AG04450 (cell line): ENCODE measurements at regions of chr15 and their contacts with region 1.

Region 1: DNA sequence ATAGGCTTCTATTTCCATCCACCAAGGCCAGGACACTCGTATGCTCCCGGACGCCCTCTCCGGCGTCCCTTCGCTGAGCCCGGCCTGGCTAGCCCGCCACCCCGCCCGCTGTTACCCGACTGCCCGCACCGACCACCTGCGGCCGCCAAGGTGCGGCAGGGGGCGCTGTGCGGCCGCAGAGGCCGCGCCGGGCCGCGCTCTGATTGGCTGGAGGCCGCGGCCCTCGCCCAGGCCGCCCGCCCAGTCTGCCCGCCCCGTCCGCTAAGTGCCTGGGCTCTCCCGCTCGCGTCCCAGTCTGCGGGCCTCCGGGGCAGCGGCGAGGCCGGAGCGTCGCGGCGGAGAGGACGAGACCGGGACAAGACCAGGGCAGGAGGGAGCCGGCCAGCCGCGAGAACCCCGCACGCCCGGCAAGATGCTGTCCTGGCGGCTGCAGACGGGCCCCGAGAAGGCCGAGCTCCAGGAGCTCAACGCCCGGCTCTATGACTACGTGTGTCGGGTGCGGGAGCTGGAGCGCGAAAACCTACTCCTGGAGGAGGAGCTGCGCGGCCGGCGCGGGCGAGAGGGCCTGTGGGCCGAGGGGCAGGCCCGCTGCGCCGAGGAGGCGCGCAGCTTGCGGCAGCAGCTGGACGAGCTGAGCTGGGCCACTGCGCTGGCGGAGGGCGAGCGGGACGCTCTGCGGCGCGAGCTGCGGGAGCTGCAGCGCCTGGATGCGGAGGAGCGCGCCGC is at the start of gene SYNM:
- DNase-seq: no peak
- H3K4me3 ChIP-seq: peak within 1 kb of the TSS; percentile 62
- H3K27ac ChIP-seq: no peak within 1 kb of the TSS
- H3K27me3 ChIP-seq: peaks cover 7% of the 10 kb centered on the region
- CTCF ChIP-seq: peak; percentile 42
- polyA plus RNA-seq, gene SYNM: 3.2 and 3.6 TPM in 2 replicates

Region 2: DNA sequence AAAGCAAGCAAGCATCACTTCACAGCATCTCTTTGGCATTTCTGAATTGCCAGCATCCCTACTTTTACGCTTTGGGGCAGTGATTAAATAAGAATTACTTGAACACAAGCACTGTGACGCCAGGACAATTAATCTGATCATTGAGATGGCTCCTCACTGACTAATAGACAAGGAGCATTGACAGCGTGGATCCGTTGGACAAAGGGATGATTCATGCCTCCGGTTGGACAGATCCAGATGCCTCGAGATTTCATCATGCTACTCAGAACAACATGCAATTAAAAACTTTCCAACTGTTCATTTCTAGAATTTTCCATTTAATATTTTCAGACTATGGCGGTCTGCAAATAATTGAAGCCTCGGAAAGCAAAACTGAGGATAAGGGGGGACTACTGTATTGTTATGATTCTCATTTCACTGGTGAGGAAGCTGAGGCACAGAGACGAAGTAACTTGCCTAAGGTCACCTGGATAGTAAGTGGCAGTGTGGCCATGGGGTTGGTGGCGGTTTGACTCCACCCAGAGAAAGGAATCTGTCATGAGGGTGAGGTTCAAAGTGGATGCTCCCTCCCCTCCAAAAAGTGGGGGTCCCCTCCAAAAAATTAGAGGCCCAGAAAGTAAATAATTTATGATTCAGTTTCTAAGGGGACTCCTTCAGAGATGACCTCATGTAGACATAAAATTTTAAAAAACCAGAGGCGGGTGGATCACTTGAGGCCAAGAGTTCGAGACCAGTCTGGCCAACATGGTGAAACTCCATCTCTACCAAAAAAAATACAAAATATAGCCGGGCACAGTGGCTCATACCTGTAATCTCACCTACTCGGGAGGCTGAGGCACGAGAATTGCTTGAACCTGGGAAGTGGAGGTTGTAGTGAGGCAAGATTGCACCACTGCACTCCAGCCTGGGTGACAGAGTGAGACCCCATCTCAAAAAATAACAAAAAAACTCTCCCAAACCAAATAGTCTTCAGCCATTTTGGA is 85.1 kb before region 1 on chr15:
- CTCF ChIA-PET with region 1: no interaction called
- POLR2A ChIA-PET with region 1: no interaction called
- DNase-seq: no peak
- H3K4me3 ChIP-seq: no peak overlapping the region
- H3K27ac ChIP-seq: no peak overlapping the region
- H3K27me3 ChIP-seq: no peaks in the 10 kb centered on the region
- CTCF ChIP-seq: no peak

Region 3: DNA sequence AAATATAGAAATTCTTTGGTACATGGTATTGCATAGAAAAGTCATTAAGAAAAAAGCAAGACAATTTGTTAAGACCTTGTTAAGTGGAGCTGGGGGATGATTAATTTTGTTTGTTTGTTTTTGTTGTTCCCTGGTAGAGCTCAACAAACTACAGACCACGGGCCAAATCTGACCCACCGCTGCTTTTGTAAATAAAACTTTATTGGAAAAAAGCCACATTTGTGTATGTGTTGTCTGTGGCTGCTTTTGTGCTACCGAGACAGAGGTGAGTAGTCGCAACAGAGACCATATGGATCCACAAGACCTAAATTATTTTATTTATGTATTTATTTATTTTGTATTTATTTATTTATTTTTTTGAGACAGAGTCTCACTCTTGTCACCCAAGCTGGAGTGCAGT is 74.1 kb before region 1 on chr15:
- CTCF ChIA-PET with region 1: no interaction called
- POLR2A ChIA-PET with region 1: no interaction called
- DNase-seq: no peak
- H3K4me3 ChIP-seq: no peak overlapping the region
- H3K27ac ChIP-seq: no peak overlapping the region
- H3K27me3 ChIP-seq: peaks cover 19% of the 10 kb centered on the region
- CTCF ChIP-seq: no peak

Region 4: DNA sequence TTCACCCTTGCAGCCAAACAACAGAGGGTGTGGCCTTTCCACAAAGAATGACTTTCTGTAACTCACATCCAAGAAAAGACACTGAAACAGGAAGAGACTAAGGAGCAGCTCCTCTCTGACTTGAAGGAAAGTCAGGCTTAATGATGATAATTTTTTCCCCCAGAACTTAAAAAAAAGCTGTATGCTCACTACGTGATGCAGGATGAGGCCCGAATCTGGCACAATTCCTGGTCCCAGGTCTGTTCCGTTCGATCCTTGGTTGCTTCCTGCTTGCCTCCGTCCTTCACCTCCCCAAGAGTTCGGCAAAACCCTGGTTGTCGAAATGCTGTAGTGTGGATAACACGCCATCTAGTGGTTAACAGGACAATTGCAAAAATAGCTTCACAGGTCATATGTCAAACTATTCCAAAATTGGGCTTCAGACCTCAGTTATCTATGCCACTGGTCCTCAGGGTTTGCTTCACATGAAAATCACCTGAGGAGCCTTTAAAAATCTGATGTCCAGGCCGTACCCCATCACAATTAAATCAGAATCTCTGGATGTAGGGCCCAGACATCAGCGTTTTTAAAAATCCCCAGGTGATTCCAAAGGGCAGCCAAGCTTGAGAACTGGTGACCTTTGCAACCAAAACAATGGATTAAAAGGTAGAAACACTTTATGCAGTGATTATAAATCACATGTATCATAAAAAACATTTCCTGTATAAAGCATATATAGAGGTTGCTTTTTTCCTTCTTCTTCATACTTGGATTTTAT is 28.2 kb before region 1 on chr15:
- CTCF ChIA-PET with region 1: interaction called, 18 read pairs
- POLR2A ChIA-PET with region 1: interaction called, 3 read pairs
- DNase-seq: peak; percentile 67
- H3K4me3 ChIP-seq: peak overlapping the region; percentile 48
- H3K27ac ChIP-seq: no peak overlapping the region
- H3K27me3 ChIP-seq: no peaks in the 10 kb centered on the region
- CTCF ChIP-seq: peak; percentile 91

Region 5: DNA sequence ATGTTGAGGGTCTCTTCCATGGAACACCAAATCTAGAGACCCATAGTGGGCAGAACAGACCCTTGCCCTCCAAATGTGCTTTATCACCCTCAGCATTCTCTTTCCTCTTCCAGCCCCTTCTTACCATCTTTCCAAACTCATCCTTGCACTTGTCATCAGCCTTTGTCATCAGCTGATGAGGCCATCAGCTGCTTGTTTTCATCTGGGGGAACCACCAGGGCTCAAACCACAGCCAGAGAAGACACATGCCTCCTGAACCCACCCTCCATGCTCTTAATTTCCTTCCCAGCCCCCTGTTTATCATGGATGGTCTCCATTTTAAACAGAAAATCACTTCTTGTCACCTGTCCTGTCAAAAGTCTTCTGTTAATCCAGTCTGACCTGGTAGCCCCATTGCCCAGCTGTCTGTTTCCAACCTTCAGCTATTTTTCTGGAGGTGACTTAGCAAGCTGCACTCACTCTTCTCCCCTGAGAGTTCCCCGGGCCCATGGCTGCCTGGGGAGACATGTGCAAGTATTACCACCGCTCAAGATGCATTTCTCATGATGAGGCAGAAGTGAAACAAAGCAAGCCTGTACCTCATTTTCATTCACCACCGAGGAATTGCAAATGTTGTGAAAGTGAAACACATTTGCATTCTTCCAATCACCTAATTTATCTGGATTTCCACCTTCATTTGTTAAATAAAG is 14.8 kb before region 1 on chr15:
- CTCF ChIA-PET with region 1: interaction called, 21 read pairs
- POLR2A ChIA-PET with region 1: no interaction called
- DNase-seq: no peak
- H3K4me3 ChIP-seq: no peak overlapping the region
- H3K27ac ChIP-seq: no peak overlapping the region
- H3K27me3 ChIP-seq: peaks cover 2% of the 10 kb centered on the region
- CTCF ChIP-seq: no peak

Region 6: DNA sequence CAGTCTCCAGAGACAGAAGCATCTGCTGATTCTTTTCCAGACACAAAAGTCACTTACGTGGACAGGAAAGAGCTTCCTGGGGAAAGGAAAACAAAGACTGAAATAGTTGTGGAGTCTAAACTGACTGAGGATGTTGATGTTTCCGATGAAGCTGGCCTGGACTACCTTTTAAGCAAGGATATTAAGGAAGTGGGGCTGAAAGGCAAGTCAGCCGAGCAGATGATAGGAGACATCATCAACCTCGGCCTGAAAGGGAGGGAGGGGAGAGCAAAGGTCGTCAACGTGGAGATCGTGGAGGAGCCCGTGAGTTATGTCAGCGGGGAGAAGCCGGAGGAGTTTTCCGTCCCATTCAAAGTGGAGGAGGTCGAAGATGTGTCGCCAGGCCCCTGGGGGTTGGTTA is 25.4 kb after region 1 on chr15:
- CTCF ChIA-PET with region 1: interaction called, 13 read pairs
- POLR2A ChIA-PET with region 1: no interaction called
- DNase-seq: no peak
- H3K4me3 ChIP-seq: no peak overlapping the region
- H3K27ac ChIP-seq: no peak overlapping the region
- H3K27me3 ChIP-seq: no peaks in the 10 kb centered on the region
- CTCF ChIP-seq: no peak

Region 7: GRCh38 chr15:99197856-99198255 is 92.9 kb after region 1 on chr15:
- CTCF ChIA-PET with region 1: interaction called, 10 read pairs
- POLR2A ChIA-PET with region 1: no interaction called
- DNase-seq: no peak
- H3K4me3 ChIP-seq: no peak overlapping the region
- H3K27ac ChIP-seq: no peak overlapping the region
- H3K27me3 ChIP-seq: no peaks in the 10 kb centered on the region
- CTCF ChIP-seq: no peak